Naive thymus-derived CD4-positive, alpha-beta T cell (primary cell): ENCODE measurements at regions of chr9 and their contacts with region 1.

Region 1: DNA sequence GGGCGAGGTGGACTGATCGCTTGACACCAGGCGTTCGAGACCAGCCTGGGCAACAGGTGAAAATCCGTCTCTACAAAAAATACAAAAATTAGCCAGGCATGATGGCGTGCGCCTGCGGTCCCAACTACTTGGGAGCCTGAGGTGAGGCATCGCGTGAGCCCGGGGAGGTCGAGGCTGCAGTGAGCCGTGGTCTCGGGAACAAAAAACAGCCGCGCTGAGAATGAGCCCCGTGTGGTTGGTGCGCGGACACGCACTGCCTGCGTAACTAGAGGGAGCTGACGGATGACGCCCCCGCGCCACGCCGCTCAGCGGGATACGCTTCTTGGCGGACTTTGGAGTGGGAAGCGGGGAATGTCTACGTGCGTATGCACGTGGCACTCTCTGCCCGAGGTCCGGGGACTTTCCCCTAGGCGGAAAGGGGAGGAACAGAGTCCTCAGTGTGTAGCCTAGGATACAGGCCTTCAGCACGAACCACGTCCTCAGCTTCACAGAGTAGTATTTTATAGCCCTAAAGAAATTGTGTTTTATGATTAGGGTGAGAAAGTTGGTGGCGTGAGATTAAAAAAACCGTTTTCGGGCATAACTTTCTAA is at the start of gene RMRP:
- DNase-seq: peak; percentile 67 to 93 (median 91)
- ATAC-seq: peak; percentile 87
- H3K4me3 ChIP-seq: peak within 1 kb of the TSS; percentile 94
- H3K4me3 Mint-ChIP-seq: peak within 1 kb of the TSS; percentile 78 to 95 (median 90)
- H3K27ac ChIP-seq: peak within 1 kb of the TSS; percentile 99
- H3K27ac Mint-ChIP-seq: peak within 1 kb of the TSS; percentile 97 to 100 (median 100)
- H3K4me1 ChIP-seq: peaks cover 35 to 48% of the 10 kb centered on the region in 2 donors
- H3K4me1 Mint-ChIP-seq: peaks cover 42 to 78% (median 69%) of the 10 kb centered on the region in 7 donors
- H3K27me3 ChIP-seq: no peaks in the 10 kb centered on the region
- H3K27me3 Mint-ChIP-seq: peaks cover 0 to 6% (median 0%) of the 10 kb centered on the region in 5 donors
- total RNA-seq, gene RMRP: 5,750 to 11,273 (median 9,225) TPM

Region 2: DNA sequence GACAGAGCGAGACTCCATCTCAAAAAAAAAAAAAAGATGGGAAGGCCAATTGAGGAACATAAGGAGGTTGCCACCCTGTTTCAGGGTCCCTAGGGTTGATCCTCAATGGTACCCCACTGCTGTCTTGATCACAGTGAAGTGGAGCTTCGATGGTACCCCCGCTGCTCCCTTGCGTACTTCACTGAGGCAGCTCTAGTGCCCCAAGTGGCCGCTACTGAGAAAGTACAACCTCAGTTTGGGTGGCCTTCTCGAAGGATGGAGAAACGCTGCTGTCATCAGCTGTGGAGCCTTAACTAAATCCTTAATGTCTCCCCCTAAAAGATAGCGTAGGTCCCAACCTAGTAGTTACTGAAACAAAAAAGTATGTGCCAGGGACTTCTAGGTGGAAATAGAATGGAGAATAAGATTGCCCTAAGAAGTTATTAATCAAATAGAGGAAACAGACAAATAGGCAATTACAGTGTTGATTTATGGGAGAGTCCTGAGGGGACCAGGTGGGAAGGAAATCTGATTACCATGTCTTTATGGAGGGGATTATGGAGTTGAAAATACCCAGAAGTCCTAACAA is 46.3 kb before region 1 on chr9:
- CTCF ChIA-PET with region 1: interaction called, 118 read pairs
- POLR2A ChIA-PET with region 1: interaction called, 33 read pairs
- intact Hi-C with region 1: no loop called
- DNase-seq: peak in 6 of 9 donors; percentile 36 to 55 (median 45)
- ATAC-seq: peak; percentile 90
- H3K4me3 ChIP-seq: no peak overlapping the region
- H3K4me3 Mint-ChIP-seq: peak overlapping the region in 1 of 10 donors; percentile 6
- H3K27ac ChIP-seq: no peak overlapping the region
- H3K27ac Mint-ChIP-seq: peak overlapping the region in 3 of 9 donors; percentile 35 to 69 (median 39)
- H3K4me1 ChIP-seq: peaks cover 15 to 17% of the 10 kb centered on the region in 2 donors
- H3K4me1 Mint-ChIP-seq: peaks cover 18 to 32% (median 24%) of the 10 kb centered on the region in 7 donors
- H3K27me3 ChIP-seq: no peaks in the 10 kb centered on the region
- H3K27me3 Mint-ChIP-seq: no peaks in the 10 kb centered on the region

Region 3: DNA sequence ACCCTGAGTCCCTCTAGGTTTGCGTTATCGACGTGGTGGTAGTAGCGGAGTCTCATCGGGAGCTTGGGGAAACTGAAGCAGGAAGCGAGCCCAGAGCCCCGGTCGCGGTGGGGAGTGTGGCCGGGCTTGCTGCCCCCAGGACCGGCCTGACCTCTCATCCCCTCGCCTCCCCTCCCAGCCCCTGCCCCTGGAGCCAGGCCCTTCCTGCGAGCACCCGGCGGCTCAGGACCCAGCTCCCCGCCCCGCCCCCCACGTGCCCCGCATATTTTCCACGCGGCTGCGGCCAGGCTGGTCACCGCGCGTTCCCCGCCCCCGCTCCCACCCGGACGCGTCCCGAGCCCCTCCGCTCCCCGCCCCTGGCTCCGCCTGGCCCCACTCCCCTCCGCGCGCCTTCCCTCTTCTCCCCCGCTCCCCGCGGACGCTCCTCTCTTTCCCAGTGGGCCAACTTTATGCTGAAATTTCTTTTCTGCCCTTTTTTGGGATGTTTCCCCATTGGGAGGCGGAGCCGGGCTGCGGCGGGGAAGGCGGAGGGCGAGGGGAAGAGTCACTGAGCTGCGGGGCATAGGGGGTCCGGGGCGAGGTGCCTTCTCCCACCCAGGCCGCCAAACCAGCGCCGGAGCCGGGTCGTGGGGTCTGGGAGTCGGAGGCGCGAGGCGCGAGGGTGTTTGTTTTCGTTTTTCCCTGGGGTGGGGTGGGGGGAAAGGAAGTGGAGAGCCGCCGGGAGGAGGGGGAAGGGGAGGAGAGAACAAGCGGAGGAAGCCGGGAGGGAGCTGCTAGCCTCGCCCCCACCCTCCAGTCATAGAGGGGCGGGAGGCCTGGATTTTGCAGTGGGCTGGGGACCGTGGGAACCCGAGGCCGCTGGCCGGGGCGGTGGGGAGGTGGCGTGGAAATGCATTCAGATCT is 33.0 kb after region 1 on chr9:
- CTCF ChIA-PET with region 1: interaction called, 107 read pairs
- POLR2A ChIA-PET with region 1: interaction called, 13 read pairs
- intact Hi-C with region 1: loop called (anchors 1 kb)
- DNase-seq: peak in 7 of 9 donors; percentile 21 to 52 (median 31)
- ATAC-seq: peak; percentile 50
- H3K4me3 ChIP-seq: peak overlapping the region; percentile 65
- H3K4me3 Mint-ChIP-seq: peak overlapping the region; percentile 80 to 94 (median 88)
- H3K27ac ChIP-seq: peak overlapping the region; percentile 70
- H3K27ac Mint-ChIP-seq: peak overlapping the region; percentile 12 to 95 (median 74)
- H3K4me1 ChIP-seq: peaks cover 0 to 5% of the 10 kb centered on the region in 2 donors
- H3K4me1 Mint-ChIP-seq: peaks cover 16 to 31% (median 25%) of the 10 kb centered on the region in 7 donors
- H3K27me3 ChIP-seq: no peaks in the 10 kb centered on the region
- H3K27me3 Mint-ChIP-seq: no peaks in the 10 kb centered on the region

Region 4: GRCh38 chr9:35748858-35749514 is 91.3 kb after region 1 on chr9 and contains the starts of genes GBA2 and RGP1:
- CTCF ChIA-PET with region 1: interaction called, 5 read pairs
- POLR2A ChIA-PET with region 1: interaction called, 11 read pairs
- intact Hi-C with region 1: loop called in 1 of 2 experiments (anchors 1 kb)
- DNase-seq: peak; percentile 36 to 82 (median 51)
- ATAC-seq: peak; percentile 84
- H3K4me3 ChIP-seq: peak within 1 kb of the TSS; percentile 84
- H3K4me3 Mint-ChIP-seq: peak within 1 kb of the TSS; percentile 89 to 98 (median 96)
- H3K27ac ChIP-seq: peak within 1 kb of the TSS; percentile 87
- H3K27ac Mint-ChIP-seq: peak within 1 kb of the TSS; percentile 89 to 97 (median 96)
- H3K4me1 ChIP-seq: peaks cover 32 to 33% of the 10 kb centered on the region in 2 donors
- H3K4me1 Mint-ChIP-seq: peaks cover 36 to 66% (median 49%) of the 10 kb centered on the region in 7 donors
- H3K27me3 ChIP-seq: no peaks in the 10 kb centered on the region
- H3K27me3 Mint-ChIP-seq: no peaks in the 10 kb centered on the region
- total RNA-seq, gene GBA2: 22.7 to 55.4 (median 49.9) TPM
- total RNA-seq, gene RGP1: 21.2 to 28.8 (median 23.3) TPM

Region 5: DNA sequence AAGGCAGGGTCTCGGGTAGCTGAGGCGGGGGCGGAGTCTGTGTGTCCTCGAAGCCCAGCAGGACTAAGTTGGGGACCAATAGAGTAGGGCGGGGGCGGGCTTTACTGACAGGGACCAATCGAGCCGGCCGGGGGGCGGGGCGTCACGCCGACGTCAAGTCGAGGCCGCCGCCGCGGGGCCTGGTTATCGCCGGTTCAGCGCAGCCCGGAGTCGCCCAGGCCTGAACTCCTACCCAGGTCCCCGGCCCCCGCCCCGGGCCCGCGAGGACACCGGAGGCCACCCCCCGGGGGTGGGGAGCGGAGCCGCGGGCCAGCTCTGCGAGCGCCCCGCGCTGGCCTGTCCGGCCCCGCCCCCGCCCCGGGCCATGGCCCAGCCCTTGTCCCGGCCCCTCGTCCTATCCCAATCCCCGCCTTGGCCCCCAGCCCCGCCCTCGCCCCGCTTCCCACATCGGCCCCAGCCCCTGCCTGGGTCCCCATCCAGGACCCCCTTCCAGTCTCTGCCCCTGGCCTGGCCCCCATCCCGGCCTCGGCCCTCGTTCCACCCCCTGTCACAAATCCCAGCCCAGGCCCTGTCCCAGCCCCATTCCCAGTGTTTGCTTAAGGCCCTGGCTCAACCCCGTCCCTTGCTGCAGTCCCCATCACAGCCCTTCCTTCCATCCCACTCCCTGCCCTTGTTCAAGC is 171.6 kb after region 1 on chr9 and contains the start of gene TMEM8B:
- CTCF ChIA-PET with region 1: interaction called, 4 read pairs
- POLR2A ChIA-PET with region 1: no interaction called
- intact Hi-C with region 1: loop called in 1 of 2 experiments (anchors 1 kb)
- DNase-seq: peak; percentile 80 to 95 (median 88)
- ATAC-seq: peak; percentile 95
- H3K4me3 ChIP-seq: peak within 1 kb of the TSS; percentile 88
- H3K4me3 Mint-ChIP-seq: peak within 1 kb of the TSS; percentile 84 to 100 (median 94)
- H3K27ac ChIP-seq: peak within 1 kb of the TSS; percentile 94
- H3K27ac Mint-ChIP-seq: peak within 1 kb of the TSS; percentile 91 to 99 (median 94)
- H3K4me1 ChIP-seq: peaks cover 4 to 14% of the 10 kb centered on the region in 2 donors
- H3K4me1 Mint-ChIP-seq: peaks cover 25 to 48% (median 43%) of the 10 kb centered on the region in 7 donors
- H3K27me3 ChIP-seq: no peaks in the 10 kb centered on the region
- H3K27me3 Mint-ChIP-seq: peaks cover 0 to 5% (median 0%) of the 10 kb centered on the region in 5 donors
- total RNA-seq, gene TMEM8B: 3.9 to 11.6 (median 10.6) TPM